ENCODE measurements at regions of chr17 and their contacts with region 1.

Region 1: GRCh38 chr17:79874329-79874981 is 35.2 kb upstream of the CBX4 start:
- DNase-seq: peak; percentile 80
- H3K4me3 ChIP-seq: no peak overlapping the region
- H3K27ac ChIP-seq: no peak overlapping the region
- H3K4me1 ChIP-seq: no peaks in the 10 kb centered on the region
- H3K27me3 ChIP-seq: no peaks in the 10 kb centered on the region; the same call in 1 of the 2 replicates
- CTCF ChIP-seq: peak; percentile 69
- EP300 ChIP-seq: no peak
- RAD21 ChIP-seq: peak; percentile 43

Region 2: DNA sequence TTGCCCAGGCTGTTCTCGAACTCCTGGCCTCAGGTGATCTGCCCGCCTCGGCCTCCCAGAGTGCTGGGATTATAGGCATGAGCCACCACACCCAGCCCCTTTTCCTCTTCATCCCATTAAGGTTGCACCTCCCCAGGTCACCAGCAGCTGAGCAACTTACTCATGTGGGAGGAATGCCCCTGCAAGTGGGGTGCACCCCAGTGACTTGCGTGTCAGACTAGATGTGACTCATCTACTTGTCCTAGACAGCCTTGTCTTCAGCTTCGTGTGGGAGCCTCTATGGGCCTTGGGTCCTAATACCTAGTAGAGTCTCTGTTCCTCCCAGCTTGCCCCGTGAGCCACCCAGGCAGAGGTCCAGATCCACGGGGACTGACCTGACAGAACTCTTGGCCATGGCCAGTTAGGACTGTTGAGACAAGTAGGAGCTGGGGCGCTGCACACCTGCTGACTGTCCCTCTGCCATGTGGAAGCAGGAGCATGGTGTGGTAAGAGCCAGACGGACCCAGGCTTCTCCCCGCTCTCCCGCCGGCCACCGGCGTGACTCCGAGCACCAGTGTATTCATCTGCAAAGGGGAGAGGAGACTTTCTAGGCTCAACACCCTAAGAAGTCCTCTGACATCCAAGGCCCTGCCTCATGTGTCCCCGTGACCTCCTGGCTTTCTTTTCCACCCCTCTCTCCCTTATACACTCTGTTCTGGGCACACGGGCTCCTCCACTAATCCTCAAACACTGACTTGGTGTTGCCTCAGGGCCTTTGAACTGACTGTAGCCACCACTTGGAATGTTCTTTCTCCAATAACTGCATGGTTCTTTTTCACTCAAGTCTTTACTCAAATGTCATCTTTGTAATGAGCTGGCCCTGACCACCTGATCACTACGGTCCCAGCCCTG is 23.6 kb before region 1 on chr17:
- CTCF ChIA-PET with region 1: interaction called, 34 read pairs
- POLR2A ChIA-PET with region 1: no interaction called
- DNase-seq: no peak
- H3K4me3 ChIP-seq: no peak overlapping the region
- H3K27ac ChIP-seq: no peak overlapping the region
- H3K4me1 ChIP-seq: peaks cover 3 to 14% of the 10 kb centered on the region in 2 experiments; a peak in 1 of 4 replicates
- H3K27me3 ChIP-seq: no peaks in the 10 kb centered on the region
- CTCF ChIP-seq: no peak
- EP300 ChIP-seq: no peak
- RAD21 ChIP-seq: no peak

Measured in SK-N-SH (cell line).